Activated CD4-positive, alpha-beta memory T cell treated with anti-CD3 and anti-CD28 coated beads for 36 hours (primary cell): ENCODE measurements at regions of chrX and their contacts with region 1.

Region 1: GRCh38 chrX:79412972-79413371 is 45.8 kb upstream of the ITM2A start:
- DNase-seq: no peak
- H3K4me3 Mint-ChIP-seq: peak overlapping the region; percentile 73
- H3K27ac Mint-ChIP-seq: peak overlapping the region; percentile 42
- H3K4me1 Mint-ChIP-seq: peaks cover 28% of the 10 kb centered on the region
- H3K27me3 Mint-ChIP-seq: no peaks in the 10 kb centered on the region

Region 2: GRCh38 chrX:78555401-78555980 is 857.5 kb before region 1 on chrX:
- CTCF ChIA-PET with region 1: interaction called, 8 read pairs
- POLR2A ChIA-PET with region 1: no interaction called
- intact Hi-C with region 1: loop called (anchors 1 kb)
- DNase-seq: no peak
- H3K4me3 Mint-ChIP-seq: no peak overlapping the region
- H3K27ac Mint-ChIP-seq: no peak overlapping the region
- H3K4me1 Mint-ChIP-seq: peaks cover 5% of the 10 kb centered on the region
- H3K27me3 Mint-ChIP-seq: no peaks in the 10 kb centered on the region

Region 3: GRCh38 chrX:79036157-79036880 is 376.7 kb before region 1 on chrX:
- CTCF ChIA-PET with region 1: no interaction called
- POLR2A ChIA-PET with region 1: no interaction called
- intact Hi-C with region 1: loop called (anchors 5 kb)
- DNase-seq: no peak
- H3K4me3 Mint-ChIP-seq: peak overlapping the region; percentile 20
- H3K27ac Mint-ChIP-seq: no peak overlapping the region
- H3K4me1 Mint-ChIP-seq: peaks cover 31% of the 10 kb centered on the region
- H3K27me3 Mint-ChIP-seq: no peaks in the 10 kb centered on the region

Region 4: GRCh38 chrX:79081895-79082512 is 331.0 kb before region 1 on chrX:
- CTCF ChIA-PET with region 1: interaction called, 15 read pairs
- POLR2A ChIA-PET with region 1: no interaction called
- intact Hi-C with region 1: loop called (anchors 1 kb)
- DNase-seq: peak; percentile 30
- H3K4me3 Mint-ChIP-seq: peak overlapping the region; percentile 69
- H3K27ac Mint-ChIP-seq: peak overlapping the region; percentile 79
- H3K4me1 Mint-ChIP-seq: peaks cover 41% of the 10 kb centered on the region
- H3K27me3 Mint-ChIP-seq: no peaks in the 10 kb centered on the region

Region 5: GRCh38 chrX:79167462-79167861 is 245.5 kb before region 1 on chrX:
- CTCF ChIA-PET with region 1: no interaction called
- POLR2A ChIA-PET with region 1: no interaction called
- intact Hi-C with region 1: loop called (anchors 10 kb)
- DNase-seq: no peak
- H3K4me3 Mint-ChIP-seq: peak overlapping the region; percentile 66
- H3K27ac Mint-ChIP-seq: peak overlapping the region; percentile 96
- H3K4me1 Mint-ChIP-seq: peaks cover 75% of the 10 kb centered on the region
- H3K27me3 Mint-ChIP-seq: no peaks in the 10 kb centered on the region

Region 6: DNA sequence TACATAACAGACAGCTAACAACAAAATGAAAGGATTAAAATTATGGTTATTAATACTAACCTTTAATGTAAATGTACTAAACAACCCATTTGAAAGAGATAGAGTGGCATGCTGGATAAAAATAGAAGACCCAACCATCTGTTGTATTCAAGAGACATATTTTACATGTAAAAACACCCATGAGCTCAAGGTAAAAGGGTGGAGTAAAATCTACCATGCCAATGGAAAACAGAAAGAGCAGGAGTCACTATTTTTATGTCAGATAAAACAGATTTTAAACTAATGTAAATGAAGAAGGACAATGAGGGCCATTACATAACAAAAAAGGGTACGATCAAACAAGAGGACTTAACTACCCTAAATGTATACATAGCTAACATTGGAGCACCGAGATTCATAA is 112.2 kb before region 1 on chrX:
- CTCF ChIA-PET with region 1: no interaction called
- POLR2A ChIA-PET with region 1: no interaction called
- intact Hi-C with region 1: no loop called
- DNase-seq: no peak
- H3K4me3 Mint-ChIP-seq: no peak overlapping the region
- H3K27ac Mint-ChIP-seq: no peak overlapping the region
- H3K4me1 Mint-ChIP-seq: no peaks in the 10 kb centered on the region
- H3K27me3 Mint-ChIP-seq: no peaks in the 10 kb centered on the region

Region 7: GRCh38 chrX:79366873-79367749 is 45.9 kb before region 1 on chrX and contains the start of gene ITM2A:
- CTCF ChIA-PET with region 1: interaction called, 12 read pairs
- POLR2A ChIA-PET with region 1: interaction called, 5 read pairs
- intact Hi-C with region 1: loop called (anchors 1 kb)
- DNase-seq: peak; percentile 75
- H3K4me3 Mint-ChIP-seq: peak within 1 kb of the TSS; percentile 95
- H3K27ac Mint-ChIP-seq: peak within 1 kb of the TSS; percentile 95
- H3K4me1 Mint-ChIP-seq: peaks cover 24% of the 10 kb centered on the region
- H3K27me3 Mint-ChIP-seq: no peaks in the 10 kb centered on the region
- total RNA-seq, gene ITM2A: 87.7 to 98.1 TPM